ENCODE measurements at regions of chr22 and their contacts with region 1.

Region 1: DNA sequence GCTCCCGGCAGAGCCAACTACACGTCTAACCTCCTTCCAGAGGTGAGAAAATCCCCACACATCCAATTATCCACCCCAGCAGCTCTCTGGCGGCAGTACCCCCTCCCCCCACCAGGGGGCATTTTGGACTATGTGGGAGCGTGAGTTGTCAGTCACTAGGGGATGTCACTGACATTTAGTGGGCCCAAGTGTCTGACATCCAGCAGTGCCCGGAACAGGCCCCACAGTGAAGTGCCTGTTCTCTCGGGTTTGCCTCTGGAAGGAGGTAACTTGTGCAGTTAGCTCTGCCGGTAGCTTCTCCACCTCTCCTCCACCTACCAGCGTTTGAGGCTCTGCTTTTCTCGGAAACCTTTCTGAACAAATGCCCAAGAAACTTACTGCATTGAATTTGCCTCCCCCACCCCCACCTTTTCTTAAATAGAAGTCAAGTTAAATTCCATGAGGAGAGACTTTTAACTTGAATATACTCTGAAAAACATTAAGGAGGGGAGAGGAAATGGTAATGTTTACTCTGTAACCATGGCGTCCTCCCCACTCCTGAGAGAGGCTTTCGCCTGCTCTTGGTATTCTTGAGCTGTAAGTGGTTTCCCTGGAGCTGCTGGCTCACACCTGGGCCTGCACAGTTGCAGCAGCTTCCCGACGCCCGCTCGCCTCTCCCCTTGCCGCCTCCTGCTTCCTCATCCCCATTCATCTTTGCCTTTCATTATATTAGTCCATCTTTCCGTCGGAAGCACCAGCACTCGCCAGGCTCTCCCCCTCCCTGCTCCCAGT is 112.8 kb downstream of the WNT7B start:
- DNase-seq: peak; percentile 80
- H3K4me3 Mint-ChIP-seq: no peak overlapping the region
- H3K27ac Mint-ChIP-seq: no peak overlapping the region
- H3K4me1 Mint-ChIP-seq: peaks cover 5% of the 10 kb centered on the region
- H3K27me3 Mint-ChIP-seq: peaks cover 23% of the 10 kb centered on the region

Region 2: DNA sequence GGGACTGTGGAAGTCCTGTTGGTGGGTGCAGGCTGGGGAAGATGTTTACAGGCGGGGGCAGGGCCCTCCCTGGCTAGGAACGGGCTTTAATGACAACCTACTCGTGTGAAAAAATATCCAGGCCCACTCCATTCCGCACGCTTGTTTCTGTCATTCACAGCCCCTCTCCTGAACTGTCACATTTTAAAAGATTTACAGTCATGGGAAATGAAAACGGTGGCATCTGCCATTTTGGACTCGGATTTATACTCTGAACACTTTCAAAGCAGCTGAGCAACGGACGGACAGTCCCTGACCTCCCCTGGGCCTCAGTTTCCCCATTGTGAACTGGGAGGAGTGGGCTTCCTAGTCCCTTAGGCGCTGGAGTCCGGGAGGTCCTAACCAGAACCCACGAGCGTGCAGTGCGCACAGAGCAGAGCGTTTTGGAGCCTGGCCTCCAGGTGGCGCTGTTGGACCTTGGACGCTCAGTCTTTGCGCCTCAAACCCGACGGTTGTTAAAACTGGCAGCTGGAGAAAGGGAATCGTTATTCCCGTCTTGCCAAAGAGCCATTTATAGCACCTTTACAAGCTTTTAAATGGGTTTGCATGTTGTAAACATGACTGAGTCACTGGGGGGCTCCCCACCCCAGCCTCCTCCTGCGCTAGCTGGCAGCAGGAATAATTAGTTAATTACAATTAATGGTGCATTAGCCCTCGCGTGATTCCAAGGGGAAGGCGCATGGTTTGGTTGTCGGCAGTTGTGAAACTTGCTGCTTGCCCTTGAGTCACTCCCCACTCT is 286.2 kb before region 1 on chr22:
- CTCF ChIA-PET with region 1: interaction called, 12 read pairs
- POLR2A ChIA-PET with region 1: no interaction called
- intact Hi-C with region 1: no loop called
- DNase-seq: peak; percentile 82
- H3K4me3 Mint-ChIP-seq: no peak overlapping the region
- H3K27ac Mint-ChIP-seq: no peak overlapping the region
- H3K4me1 Mint-ChIP-seq: no peaks in the 10 kb centered on the region
- H3K27me3 Mint-ChIP-seq: peaks cover 12% of the 10 kb centered on the region

Region 3: DNA sequence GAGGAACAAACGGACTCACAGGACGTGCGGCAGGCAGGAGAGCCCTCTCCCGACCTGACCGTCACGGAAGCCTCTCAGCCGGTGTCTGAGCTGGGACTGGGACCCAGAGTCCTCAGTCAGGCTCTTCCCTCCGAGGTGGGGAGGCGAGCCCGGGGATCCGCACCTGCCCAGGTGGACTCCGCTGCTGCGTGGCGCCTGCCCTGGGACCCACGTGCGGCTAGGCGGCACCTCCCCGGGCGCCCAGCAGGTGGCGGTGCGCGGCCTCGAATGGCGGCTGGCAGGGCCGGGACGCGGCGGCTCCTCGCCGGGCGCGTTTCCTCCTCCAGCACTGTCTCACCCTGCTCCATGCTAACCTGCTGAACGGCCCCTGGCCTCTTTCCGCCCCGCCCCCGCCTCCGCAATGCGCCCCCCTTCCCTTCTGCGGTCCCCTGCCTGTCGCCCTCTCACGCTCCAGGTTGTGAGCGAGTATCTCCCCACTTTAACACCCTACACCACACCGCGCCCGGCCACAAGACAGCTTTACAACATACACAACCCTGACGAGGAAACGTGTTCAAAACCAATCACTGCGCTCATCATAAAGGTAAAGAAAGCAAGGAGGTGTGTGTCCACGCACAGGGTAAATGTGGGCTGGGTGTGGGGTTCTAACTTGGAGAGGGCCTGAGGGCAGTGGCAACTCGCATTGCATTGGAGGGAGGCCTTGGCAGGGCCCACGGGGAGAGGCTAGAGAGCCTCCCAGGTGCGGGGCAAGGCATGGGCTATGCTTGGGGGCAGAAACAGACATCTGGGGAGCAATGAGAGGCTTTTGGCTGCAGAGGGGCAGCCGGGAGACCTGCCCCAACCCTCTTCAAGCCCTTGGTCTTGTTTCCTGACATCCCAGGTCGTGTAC is 218.4 kb before region 1 on chr22:
- CTCF ChIA-PET with region 1: interaction called, 38 read pairs
- POLR2A ChIA-PET with region 1: no interaction called
- intact Hi-C with region 1: loop called (anchors 10 kb)
- DNase-seq: peak; percentile 82
- H3K4me3 Mint-ChIP-seq: no peak overlapping the region
- H3K27ac Mint-ChIP-seq: no peak overlapping the region
- H3K4me1 Mint-ChIP-seq: peaks cover 3% of the 10 kb centered on the region
- H3K27me3 Mint-ChIP-seq: peaks cover 27% of the 10 kb centered on the region

Region 4: DNA sequence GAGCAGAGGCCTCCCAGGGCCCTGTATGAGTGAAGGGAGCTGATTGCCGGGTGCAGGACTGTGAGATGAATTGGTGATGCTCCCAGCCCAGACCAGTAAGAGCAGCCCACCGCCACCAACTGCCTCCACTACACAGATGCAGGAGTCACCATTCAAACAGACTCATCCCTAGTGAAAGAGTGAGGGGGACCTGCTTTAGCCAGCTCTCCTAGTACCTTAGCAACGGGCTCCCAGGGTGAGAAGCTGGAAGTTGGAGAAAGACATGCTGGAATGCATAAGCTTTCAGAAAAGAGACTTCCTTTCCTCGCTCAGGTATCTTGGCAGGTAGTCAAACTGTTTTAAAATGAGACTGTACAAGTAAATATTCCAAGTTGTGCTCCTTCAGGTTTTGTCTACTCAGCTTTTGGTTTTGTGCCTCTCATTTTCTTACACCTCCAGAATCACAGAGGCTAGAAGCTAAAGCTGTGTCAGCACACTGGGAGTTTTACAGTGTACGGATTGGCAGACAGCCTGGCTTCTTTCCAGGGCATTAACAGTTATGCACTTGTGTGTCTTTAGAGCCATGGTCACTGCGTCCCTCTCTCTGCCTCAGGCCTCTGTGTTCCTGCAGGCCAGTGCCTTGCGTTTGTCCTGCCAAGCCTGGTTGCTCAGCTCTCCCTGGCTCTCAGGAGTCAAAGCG is 46.3 kb before region 1 on chr22:
- CTCF ChIA-PET with region 1: no interaction called
- POLR2A ChIA-PET with region 1: no interaction called
- intact Hi-C with region 1: no loop called
- DNase-seq: no peak
- H3K4me3 Mint-ChIP-seq: no peak overlapping the region
- H3K27ac Mint-ChIP-seq: no peak overlapping the region
- H3K4me1 Mint-ChIP-seq: no peaks in the 10 kb centered on the region
- H3K27me3 Mint-ChIP-seq: no peaks in the 10 kb centered on the region

Region 5: DNA sequence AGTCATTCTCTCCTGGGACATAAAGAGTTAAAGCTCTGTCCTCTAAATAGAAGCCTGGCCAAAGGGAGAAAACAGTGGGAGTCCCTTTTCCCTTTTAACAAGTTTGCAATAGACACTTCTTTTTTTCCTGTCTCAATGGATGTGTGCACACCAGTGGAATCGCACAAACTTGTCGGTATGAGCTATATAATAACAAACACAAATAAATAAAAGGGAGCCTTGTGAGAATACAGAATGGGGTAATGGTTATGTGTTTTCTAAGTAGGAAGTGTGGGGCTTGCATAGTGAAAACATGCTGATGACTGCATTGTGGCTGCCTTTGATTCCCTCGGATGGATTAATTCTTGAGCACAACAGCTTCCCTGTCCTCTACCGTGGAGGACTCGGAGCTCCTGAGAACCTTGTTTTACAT is 19.1 kb before region 1 on chr22:
- CTCF ChIA-PET with region 1: interaction called, 11 read pairs
- POLR2A ChIA-PET with region 1: no interaction called
- intact Hi-C with region 1: no loop called
- DNase-seq: no peak
- H3K4me3 Mint-ChIP-seq: no peak overlapping the region
- H3K27ac Mint-ChIP-seq: no peak overlapping the region
- H3K4me1 Mint-ChIP-seq: no peaks in the 10 kb centered on the region
- H3K27me3 Mint-ChIP-seq: no peaks in the 10 kb centered on the region

Region 6: DNA sequence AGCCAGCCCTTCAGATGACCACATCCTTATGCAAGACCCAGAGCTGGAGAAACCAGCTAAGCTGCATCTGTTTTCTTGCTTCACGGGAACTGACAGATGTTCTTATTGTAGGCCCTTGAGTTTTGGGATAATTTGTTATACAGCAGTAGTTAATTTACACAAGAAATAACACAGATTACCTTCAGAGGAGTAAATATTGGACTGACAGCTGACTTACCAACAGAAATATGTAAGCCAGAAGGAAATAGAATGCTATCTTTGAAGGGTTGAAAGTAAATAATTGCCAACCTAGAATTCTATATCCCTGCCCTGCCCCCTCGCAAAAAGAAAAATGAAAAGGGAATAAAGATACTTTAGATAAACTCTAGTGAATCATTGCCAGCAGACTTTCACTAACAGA is 11.3 kb before region 1 on chr22:
- CTCF ChIA-PET with region 1: interaction called, 16 read pairs
- POLR2A ChIA-PET with region 1: no interaction called
- intact Hi-C with region 1: no loop called
- DNase-seq: no peak
- H3K4me3 Mint-ChIP-seq: no peak overlapping the region
- H3K27ac Mint-ChIP-seq: no peak overlapping the region
- H3K4me1 Mint-ChIP-seq: no peaks in the 10 kb centered on the region
- H3K27me3 Mint-ChIP-seq: no peaks in the 10 kb centered on the region

Region 7: GRCh38 chr22:46116491-46116958 is 252.4 kb after region 1 on chr22:
- CTCF ChIA-PET with region 1: interaction called, 12 read pairs
- POLR2A ChIA-PET with region 1: no interaction called
- intact Hi-C with region 1: no loop called
- DNase-seq: peak; percentile 91
- H3K4me3 Mint-ChIP-seq: no peak overlapping the region
- H3K27ac Mint-ChIP-seq: no peak overlapping the region
- H3K4me1 Mint-ChIP-seq: peaks cover 2% of the 10 kb centered on the region
- H3K27me3 Mint-ChIP-seq: no peaks in the 10 kb centered on the region

Measured in activated CD4-positive, alpha-beta memory T cell treated with anti-CD3 and anti-CD28 coated beads for 36 hours (primary cell).